ENCODE measurements at regions of chr1 and their contacts with region 1.

Region 1: GRCh38 chr1:154335025-154335714 is 9.8 kb downstream of the ATP8B2 start:
- DNase-seq: peak; percentile 90
- CTCF ChIP-seq: peak; percentile 76

Region 2: GRCh38 chr1:154193821-154194220 is 141.3 kb before region 1 on chr1:
- CTCF ChIA-PET with region 1: interaction called, 30 read pairs
- POLR2A ChIA-PET with region 1: no interaction called
- DNase-seq: no peak
- CTCF ChIP-seq: no peak

Region 3: DNA sequence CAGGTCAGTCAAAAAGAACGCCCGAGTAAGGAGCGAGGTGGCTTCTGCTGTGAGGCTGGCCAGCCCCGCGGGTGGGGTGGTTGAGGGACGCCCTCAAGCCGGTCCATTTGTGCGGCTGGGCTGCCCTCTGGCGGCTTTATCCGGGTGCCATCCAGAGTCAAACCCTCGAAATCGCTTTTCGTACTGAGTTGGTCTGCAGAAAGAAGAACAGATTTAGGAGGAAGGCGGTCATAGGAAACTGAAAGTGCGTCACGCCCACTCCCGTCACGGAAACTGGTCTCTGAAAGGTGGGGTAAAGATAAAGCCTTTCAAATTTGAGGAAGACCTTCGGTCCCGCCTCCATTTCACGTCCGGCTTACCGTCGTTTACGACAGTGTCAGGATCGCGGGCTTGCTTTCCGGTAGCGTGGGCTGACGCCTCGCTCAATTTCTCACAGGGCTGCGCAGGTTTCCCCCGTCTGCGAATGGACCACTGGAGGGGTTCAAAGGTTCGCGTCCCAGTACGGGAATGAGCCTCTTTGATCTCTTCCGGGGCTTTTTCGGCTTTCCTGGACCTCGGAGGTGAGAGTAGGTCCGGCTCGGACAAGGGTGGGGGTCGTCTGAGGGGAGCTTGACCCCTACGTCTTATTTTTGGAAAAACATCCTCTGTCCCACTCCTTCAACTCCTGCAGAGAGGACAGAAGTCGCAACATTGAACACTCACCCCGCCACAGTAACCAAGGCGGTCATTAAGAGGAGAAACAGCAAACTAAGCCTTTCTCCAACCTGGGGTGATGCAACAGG is 62.8 kb before region 1 on chr1 and contains the start of gene HAX1:
- CTCF ChIA-PET with region 1: interaction called, 38 read pairs
- POLR2A ChIA-PET with region 1: no interaction called
- DNase-seq: peak; percentile 95
- CTCF ChIP-seq: peak; percentile 74

Region 4: DNA sequence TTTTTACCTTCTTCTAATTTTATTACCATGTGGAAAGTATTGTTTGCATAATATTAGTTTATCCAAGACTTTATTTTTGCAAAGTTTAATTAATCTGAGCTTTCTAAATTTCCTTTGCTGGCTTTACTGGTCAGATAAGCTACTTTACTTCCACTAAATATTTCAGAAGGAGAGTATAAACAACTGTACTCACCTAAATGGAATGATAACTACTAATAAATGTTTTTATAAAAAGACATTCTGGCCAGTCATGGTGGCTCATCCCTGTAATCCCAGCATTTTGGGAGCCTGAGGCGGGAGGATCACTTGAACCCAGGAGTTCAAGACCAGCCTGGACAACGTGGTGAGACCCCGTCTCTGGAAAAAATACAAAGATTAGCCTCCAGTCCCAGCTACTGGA is 26.2 kb after region 1 on chr1:
- CTCF ChIA-PET with region 1: interaction called, 19 read pairs
- POLR2A ChIA-PET with region 1: no interaction called
- DNase-seq: no peak
- CTCF ChIP-seq: no peak

Region 5: DNA sequence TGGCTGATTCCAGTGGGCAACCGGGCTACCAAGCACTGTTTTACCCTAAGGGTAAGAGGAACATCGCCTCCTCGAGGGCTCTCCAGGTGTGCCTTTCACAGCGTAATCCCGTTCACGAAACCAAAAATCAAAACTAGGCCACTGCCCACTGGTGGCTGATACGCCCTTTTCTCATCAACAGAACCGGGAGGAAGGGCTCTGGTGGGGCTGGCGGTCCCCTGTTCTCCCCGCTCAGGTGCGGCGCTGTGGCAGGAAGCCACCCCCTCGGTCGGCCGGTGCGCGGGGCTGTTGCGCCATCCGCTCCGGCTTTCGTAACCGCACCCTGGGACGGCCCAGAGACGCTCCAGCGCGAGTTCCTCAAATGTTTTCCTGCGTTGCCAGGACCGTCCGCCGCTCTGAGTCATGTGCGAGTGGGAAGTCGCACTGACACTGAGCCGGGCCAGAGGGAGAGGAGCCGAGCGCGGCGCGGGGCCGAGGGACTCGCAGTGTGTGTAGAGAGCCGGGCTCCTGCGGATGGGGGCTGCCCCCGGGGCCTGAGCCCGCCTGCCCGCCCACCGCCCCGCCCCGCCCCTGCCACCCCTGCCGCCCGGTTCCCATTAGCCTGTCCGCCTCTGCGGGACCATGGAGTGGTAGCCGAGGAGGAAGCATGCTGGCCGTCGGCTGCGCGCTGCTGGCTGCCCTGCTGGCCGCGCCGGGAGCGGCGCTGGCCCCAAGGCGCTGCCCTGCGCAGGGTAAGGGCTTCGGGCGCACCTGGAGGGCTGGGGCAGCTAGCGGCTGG is 70.0 kb after region 1 on chr1 and contains the start of gene IL6R:
- CTCF ChIA-PET with region 1: interaction called, 10 read pairs
- POLR2A ChIA-PET with region 1: interaction called, 3 read pairs
- DNase-seq: peak; percentile 63
- CTCF ChIP-seq: peak; percentile 62

Region 6: GRCh38 chr1:154479764-154480421 is 144.7 kb after region 1 on chr1:
- CTCF ChIA-PET with region 1: interaction called, 14 read pairs
- POLR2A ChIA-PET with region 1: no interaction called
- DNase-seq: peak; percentile 74
- CTCF ChIP-seq: peak; percentile 81

Measured in GM10248 (cell line).